ENCODE measurements at regions of chr9 and their contacts with region 1.

Region 1: GRCh38 chr9:4077499-4078102 is 222.3 kb downstream of the GLIS3 start:
- DNase-seq: peak; percentile 76
- H3K4me3 ChIP-seq: no peak overlapping the region
- H3K27ac ChIP-seq: no peak overlapping the region
- H3K4me1 ChIP-seq: peaks cover 2% of the 10 kb centered on the region
- H3K27me3 ChIP-seq: no peaks in the 10 kb centered on the region
- CTCF ChIP-seq: peak; percentile 83 to 85
- POLR2A ChIP-seq: no peak

Region 2: DNA sequence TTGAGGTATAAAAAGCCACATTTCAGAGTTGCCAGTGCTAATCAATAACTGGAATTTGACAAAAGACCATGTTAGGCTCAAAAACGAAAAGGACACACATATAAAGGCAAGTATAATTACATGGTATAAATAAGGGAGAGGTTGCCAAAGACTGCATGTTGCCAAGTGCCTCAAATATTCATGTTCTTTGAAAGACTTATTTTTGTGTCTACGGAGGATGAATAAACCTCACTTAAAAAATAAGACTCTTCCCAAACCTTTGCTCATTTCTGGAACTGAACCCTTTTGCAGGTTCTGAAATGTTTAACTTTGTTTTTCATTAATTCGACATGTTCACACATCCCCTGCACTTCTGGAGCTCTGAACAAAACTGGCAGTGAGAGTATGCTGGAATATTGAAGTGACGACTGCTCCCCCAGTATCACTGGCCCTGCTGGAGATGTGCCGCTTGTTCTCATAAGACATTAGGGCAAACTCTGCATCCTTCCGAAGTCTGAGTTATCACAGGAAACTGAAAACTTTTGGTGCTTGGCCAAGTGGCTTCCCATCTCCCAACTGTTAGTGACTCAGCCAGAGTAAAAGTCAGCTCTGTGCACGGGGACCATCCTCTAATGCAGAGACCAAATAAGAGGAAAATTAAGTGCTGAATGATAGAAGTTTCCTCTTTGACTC is 114.5 kb before region 1 on chr9:
- CTCF ChIA-PET with region 1: no interaction called
- POLR2A ChIA-PET with region 1: no interaction called
- dilution Hi-C with region 1: no loop called
- intact Hi-C with region 1: no loop called
- DNase-seq: peak; percentile 24
- H3K4me3 ChIP-seq: no peak overlapping the region
- H3K27ac ChIP-seq: no peak overlapping the region
- H3K4me1 ChIP-seq: peaks cover 3% of the 10 kb centered on the region
- H3K27me3 ChIP-seq: no peaks in the 10 kb centered on the region
- CTCF ChIP-seq: no peak
- POLR2A ChIP-seq: no peak

Region 3: GRCh38 chr9:4058931-4059330 is 18.7 kb before region 1 on chr9:
- CTCF ChIA-PET with region 1: interaction called, 21 read pairs
- POLR2A ChIA-PET with region 1: no interaction called
- dilution Hi-C with region 1: no loop called
- intact Hi-C with region 1: no loop called
- DNase-seq: no peak
- H3K4me3 ChIP-seq: no peak overlapping the region
- H3K27ac ChIP-seq: no peak overlapping the region
- H3K4me1 ChIP-seq: no peaks in the 10 kb centered on the region
- H3K27me3 ChIP-seq: no peaks in the 10 kb centered on the region
- CTCF ChIP-seq: no peak
- POLR2A ChIP-seq: no peak

Region 4: DNA sequence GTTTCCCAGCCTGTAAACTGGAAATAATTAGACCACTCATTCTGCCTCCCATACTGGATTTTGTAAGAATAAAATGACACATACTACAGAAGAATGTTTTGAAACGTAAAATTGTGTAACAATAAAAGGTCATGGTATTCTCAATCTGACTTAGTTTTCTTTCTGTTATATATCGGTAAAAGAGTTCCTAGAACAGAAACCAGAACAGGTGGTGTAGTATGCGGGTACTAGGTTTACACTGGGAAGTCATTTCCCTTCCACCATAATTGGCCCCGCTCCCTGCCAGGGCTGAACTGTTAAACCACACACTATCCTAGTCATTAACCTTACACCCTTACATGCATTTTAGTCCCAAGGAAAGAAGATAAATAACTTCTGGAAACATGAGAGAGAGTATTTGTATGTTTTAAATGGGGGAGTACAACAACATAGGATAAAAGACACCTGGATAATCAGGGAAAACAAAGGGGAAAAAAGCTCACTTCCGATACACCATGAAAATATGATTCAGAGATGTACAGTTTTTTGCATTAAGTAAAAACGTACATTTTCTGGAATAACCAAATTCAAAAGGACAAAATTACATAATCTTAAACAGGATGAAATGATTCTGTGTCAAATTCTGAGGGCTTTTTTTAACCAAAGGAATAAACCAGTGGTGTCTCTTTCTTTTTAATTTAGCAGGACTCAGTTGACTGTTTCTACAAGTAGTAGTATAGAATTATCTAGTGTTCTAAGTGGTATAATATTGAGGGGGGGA is 22.6 kb after region 1 on chr9:
- CTCF ChIA-PET with region 1: interaction called, 13 read pairs
- POLR2A ChIA-PET with region 1: no interaction called
- dilution Hi-C with region 1: no loop called
- intact Hi-C with region 1: no loop called
- DNase-seq: no peak
- H3K4me3 ChIP-seq: no peak overlapping the region
- H3K27ac ChIP-seq: no peak overlapping the region
- H3K4me1 ChIP-seq: no peaks in the 10 kb centered on the region
- H3K27me3 ChIP-seq: no peaks in the 10 kb centered on the region
- CTCF ChIP-seq: no peak
- POLR2A ChIP-seq: no peak

Region 5: GRCh38 chr9:4228606-4229005 is 151.0 kb after region 1 on chr9:
- CTCF ChIA-PET with region 1: interaction called, 58 read pairs
- POLR2A ChIA-PET with region 1: no interaction called
- dilution Hi-C with region 1: no loop called
- intact Hi-C with region 1: loop called (anchors 1 kb)
- DNase-seq: peak; percentile 25
- H3K4me3 ChIP-seq: no peak overlapping the region
- H3K27ac ChIP-seq: no peak overlapping the region
- H3K4me1 ChIP-seq: no peaks in the 10 kb centered on the region
- H3K27me3 ChIP-seq: peaks cover 0 to 2% of the 10 kb centered on the region in 2 experiments
- CTCF ChIP-seq: peak; percentile 11 to 42
- POLR2A ChIP-seq: no peak

Region 6: DNA sequence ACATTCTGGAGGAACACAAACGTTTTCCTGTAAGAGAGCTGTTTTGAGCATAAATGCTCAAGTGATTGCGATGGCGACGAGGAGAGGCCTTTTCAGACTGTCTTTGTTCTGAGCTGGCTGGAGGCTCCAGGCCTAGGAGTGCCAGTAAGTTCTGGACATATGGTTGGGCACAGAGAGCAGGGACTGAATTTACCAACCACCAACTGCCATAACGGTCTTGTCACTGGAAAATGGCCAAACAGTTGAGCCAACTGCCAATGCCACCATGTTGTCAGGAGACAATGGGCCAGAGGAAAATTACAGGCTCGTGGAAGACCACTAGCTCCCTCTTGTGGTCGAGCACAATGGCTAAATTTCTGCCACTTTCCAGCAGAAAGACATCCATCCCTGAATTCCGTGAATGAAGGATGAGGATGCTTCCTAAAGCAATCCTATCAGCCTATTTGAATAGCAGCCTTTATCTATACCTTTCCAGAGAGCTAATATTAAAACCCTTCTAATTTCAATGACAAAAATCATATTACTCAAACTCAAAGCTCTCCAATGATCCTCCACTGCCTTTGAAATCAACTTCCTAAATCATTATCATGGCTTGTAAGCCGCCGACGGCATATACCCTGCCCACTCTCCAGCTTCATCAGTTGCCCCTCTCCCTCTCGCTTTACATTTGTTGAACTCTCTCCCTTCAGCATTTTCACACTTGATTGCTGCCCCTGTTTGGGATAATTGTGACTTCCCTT is 289.2 kb after region 1 on chr9:
- CTCF ChIA-PET with region 1: interaction called, 25 read pairs
- POLR2A ChIA-PET with region 1: no interaction called
- dilution Hi-C with region 1: no loop called
- intact Hi-C with region 1: loop called (anchors 5 kb)
- DNase-seq: peak; percentile 53
- H3K4me3 ChIP-seq: no peak overlapping the region
- H3K27ac ChIP-seq: no peak overlapping the region
- H3K4me1 ChIP-seq: no peaks in the 10 kb centered on the region
- H3K27me3 ChIP-seq: peaks cover 2 to 5% of the 10 kb centered on the region in 2 experiments
- CTCF ChIP-seq: peak; percentile 74 to 81
- POLR2A ChIP-seq: no peak

Measured in endothelial cell of umbilical vein (primary cell).